BJ (cell line): ENCODE measurements at regions of chr12 and their contacts with region 1.

Region 1: GRCh38 chr12:54993161-54993835 is 8.7 kb upstream of the TESPA1 start:
- DNase-seq: no peak
- H3K4me3 ChIP-seq: no peak overlapping the region
- H3K27me3 ChIP-seq: no peaks in the 10 kb centered on the region; the same call in 1 of the 2 replicates
- CTCF ChIP-seq: peak; percentile 81

Region 2: DNA sequence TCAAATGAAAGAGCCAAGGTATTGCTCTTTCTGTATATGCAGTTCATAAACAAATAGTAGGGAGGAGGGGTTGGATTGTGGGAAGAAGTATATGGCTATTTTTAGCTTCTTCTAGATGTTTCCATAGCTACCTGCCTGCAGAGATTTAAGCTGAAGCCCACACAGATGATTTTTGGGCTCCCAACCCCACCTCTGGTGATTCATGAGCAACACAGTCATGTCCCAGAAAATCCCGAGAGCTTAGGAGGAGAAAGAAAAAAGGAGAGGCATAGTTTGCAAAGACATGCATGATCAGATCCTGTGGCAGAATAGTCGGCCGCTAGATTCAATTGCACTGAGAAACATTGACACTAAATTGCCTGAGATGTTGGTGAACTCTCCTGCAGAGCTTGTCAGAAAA is 22.6 kb before region 1 on chr12:
- CTCF ChIA-PET with region 1: interaction called, 13 read pairs
- POLR2A ChIA-PET with region 1: no interaction called
- DNase-seq: no peak
- H3K4me3 ChIP-seq: no peak overlapping the region
- H3K27me3 ChIP-seq: no peaks in the 10 kb centered on the region
- CTCF ChIP-seq: no peak

Region 3: DNA sequence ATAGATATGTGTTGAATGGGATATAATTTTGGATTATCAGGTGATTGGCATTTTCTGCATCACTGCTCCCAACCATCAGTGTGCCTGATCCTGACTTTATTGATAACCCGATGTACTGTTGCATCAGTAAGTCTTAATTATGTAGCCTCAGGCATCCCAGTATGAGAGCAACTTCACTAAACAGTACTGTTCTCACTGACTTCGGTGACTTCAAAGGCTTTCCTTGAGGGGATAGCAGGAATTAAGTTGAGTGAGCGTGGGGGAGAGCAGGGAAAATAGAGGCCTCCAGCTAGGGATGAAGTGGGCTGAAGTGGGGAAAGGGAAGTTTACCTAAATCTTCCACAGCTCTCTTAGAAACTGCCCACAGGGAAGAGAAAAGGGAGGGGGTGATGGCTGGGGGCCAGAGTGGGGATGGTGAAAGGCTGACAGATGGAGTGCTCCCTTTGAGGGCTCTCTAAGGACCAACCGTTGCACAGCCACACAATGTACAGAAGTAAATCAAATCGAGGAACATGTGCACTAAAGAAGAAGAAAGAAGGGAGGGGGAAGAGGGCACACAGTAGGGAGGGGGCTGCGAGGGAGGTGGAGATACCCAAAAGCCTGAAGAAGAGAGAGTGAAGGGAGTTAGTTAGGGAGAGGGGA is 15.8 kb after region 1 on chr12:
- CTCF ChIA-PET with region 1: interaction called, 17 read pairs
- POLR2A ChIA-PET with region 1: no interaction called
- DNase-seq: no peak
- H3K4me3 ChIP-seq: no peak overlapping the region
- H3K27me3 ChIP-seq: peaks cover 1% of the 10 kb centered on the region; the same call in 1 of the 2 replicates
- CTCF ChIP-seq: no peak

Region 4: DNA sequence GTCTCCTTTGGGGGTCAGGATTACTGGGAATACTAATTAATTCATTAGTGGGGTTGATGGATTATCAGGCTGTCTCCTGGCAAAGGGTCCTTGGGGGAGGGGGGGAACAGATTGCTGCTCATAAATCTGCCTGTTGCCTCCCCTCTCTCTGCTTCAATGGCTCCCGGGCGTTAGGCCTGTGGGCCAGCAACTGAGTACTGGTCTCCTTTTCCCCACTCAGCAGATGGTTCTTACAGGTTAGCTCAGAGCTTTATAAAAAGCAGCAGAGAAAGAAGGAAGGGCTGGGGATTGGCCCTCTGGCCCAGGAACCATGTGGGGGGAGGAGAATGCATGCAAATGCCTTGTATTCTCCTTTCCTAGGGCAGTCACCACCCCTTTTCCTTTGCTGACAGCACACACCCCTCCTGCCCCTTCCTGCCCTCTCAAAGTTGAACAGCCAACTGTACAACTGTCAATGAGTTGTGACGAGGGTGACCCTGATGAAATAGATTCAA is 24.2 kb after region 1 on chr12:
- CTCF ChIA-PET with region 1: interaction called, 14 read pairs
- POLR2A ChIA-PET with region 1: no interaction called
- DNase-seq: no peak
- H3K4me3 ChIP-seq: no peak overlapping the region
- H3K27me3 ChIP-seq: no peaks in the 10 kb centered on the region
- CTCF ChIP-seq: no peak

Region 5: DNA sequence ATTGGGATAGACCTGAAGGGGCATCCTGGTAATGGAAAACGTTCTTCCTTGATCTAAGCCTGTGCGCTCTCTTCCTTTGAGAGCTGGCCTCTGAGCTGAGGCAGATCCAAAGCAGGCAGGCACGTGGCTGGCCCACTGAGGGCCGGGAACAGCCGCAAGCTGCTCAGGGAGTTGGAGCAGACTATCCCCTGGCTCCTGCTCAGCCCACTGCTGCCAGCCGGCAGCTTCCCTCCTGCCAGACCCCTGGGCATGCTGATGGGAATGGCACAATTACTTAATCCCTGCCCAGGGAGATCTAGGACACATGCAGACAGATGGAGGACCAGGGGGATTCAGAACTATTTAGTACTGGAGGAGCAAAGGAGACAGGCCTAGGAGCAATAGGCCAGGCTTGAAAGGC is 40.9 kb after region 1 on chr12:
- CTCF ChIA-PET with region 1: interaction called, 12 read pairs
- POLR2A ChIA-PET with region 1: no interaction called
- DNase-seq: no peak
- H3K4me3 ChIP-seq: no peak overlapping the region
- H3K27me3 ChIP-seq: no peaks in the 10 kb centered on the region
- CTCF ChIP-seq: no peak

Region 6: GRCh38 chr12:55073043-55074022 is 80.0 kb after region 1 on chr12:
- CTCF ChIA-PET with region 1: interaction called, 234 read pairs
- POLR2A ChIA-PET with region 1: no interaction called
- DNase-seq: no peak
- H3K4me3 ChIP-seq: no peak overlapping the region
- H3K27me3 ChIP-seq: no peaks in the 10 kb centered on the region
- CTCF ChIP-seq: peak; percentile 88